Activated naive CD4-positive, alpha-beta T cell treated with anti-CD3 and anti-CD28 coated beads, Interleukin-2, amount 10 ng/mL, durations not matched to agents 7 days and 5 days (primary cell): ENCODE measurements at regions of chr1 and their contacts with region 1.

Region 1: GRCh38 chr1:155167166-155168104 is 5.7 kb downstream of the KRTCAP2 start:
- DNase-seq: peak; percentile 93
- H3K4me3 Mint-ChIP-seq: peak overlapping the region; percentile 12
- H3K27ac Mint-ChIP-seq: no peak overlapping the region
- H3K4me1 Mint-ChIP-seq: peaks cover 31% of the 10 kb centered on the region
- H3K27me3 Mint-ChIP-seq: peaks cover 21% of the 10 kb centered on the region

Region 2: DNA sequence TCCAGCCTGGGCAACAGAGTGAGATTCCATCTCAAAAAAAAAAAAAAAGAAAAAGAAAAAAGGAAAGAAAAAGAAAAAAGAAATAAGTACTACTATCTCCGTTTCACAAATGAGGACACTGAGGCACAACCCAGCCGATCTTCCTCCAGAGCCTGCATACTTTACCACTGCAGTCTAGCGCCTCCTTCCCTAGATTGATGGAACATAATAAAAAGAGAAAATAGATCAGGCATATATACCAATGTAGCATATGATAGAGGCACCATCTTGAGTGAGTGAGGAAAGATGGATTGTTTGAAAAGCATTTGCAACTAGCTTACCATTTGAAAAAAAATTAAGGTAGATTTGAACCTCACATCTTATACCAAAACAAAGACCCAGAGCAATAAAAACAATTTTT is 21.9 kb before region 1 on chr1:
- CTCF ChIA-PET with region 1: interaction called, 10 read pairs
- DNase-seq: no peak
- H3K4me3 Mint-ChIP-seq: no peak overlapping the region
- H3K27ac Mint-ChIP-seq: no peak overlapping the region
- H3K4me1 Mint-ChIP-seq: peaks cover 11% of the 10 kb centered on the region
- H3K27me3 Mint-ChIP-seq: peaks cover 49% of the 10 kb centered on the region

Region 3: DNA sequence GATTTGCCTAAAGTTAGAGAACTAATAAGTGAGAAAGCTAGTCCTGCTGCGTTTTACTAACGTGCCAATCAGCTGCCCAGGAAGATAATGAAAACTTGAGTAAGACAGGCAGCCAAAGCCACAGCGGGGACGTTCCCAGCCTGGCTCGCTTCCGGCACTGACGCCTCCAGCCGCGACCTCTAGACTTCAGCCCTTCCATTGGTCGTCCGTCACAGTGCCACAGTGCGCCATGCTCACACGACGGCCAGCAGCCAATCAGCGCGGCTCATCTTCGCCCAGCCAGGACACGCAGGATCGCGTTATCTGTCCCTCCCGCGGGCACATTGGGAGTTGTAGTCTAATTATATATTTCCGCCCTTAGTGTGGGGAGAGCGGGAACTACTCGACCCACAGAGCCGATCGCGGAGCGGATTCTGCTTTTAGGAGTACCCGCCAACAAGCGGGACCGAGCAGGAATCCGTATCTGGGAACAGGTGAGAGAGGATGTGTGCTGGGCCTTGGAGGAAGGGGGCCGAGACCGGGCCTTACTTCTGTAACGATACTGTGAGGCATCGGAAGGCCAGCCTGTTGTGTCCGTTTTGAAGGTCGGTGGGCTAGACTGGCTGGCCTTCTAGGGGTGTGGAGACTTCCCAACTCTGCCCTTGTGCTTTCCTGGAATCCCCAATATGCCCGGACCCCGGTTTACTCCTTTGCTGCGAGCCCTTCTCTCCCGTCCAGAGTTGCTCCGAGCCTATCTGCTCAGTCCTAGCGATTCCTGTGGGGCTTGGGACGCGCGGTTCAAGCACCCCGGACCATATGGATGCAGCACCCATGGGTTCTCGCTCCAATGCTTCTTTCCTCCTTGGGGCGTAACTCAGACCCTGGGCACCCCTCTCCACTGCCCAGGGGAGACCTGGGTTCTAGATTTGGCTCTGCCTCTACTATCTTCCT is 141.3 kb after region 1 on chr1 and contains the start of gene FDPS:
- CTCF ChIA-PET with region 1: no interaction called
- DNase-seq: peak; percentile 99
- H3K4me3 Mint-ChIP-seq: peak within 1 kb of the TSS; percentile 91
- H3K27ac Mint-ChIP-seq: peak within 1 kb of the TSS; percentile 95
- H3K4me1 Mint-ChIP-seq: peaks cover 45% of the 10 kb centered on the region
- H3K27me3 Mint-ChIP-seq: peaks cover 13% of the 10 kb centered on the region